Colonic mucosa (tissue), 4 donors: ENCODE measurements at regions of chr16 and their contacts with region 1.

Region 1: DNA sequence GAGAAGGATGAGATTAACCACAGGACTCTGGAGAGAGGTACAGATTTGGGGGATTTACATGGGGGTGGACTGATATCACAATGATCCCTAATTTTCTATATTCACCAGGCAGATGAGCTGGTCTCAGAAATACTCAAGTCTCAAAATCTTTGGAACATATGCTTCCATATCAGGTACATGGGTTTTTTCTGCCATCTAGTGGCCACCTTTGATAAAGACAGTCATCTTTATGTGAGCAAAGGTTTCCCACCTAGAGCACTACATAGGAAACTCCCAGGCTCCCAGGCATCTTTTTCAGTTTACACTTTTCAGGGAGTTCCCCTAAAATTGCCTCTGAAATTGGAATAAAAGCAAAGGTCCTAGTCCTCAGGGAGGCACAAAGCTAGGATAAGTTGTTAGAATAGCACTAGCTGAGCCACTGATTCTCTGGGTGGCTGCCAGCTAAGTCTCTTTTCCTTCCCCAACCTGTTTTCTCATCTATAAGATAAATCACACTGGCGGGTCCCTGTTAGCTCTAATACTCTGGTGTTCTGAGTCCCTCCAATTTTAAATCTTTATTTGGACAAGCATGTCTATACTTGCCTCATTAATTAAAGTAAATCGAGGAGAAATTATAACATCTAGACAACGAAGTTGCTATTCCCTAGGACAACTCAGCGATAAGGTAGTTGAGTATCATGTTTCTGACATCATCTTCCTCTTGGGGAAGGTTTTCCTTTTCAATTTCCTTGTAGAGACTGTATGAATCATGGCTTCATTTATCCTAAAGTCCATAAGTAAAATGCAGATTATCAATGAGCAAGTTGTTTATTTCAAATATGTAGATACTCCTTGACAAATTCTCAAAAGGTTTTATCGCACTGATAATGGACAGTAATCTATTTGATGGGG is 19.0 kb upstream of the MON1B start:
- DNase-seq: peak; percentile 34
- H3K4me3 ChIP-seq: no peak overlapping the region
- H3K27ac ChIP-seq: no peak overlapping the region
- H3K4me1 ChIP-seq: no peaks in the 10 kb centered on the region
- H3K27me3 ChIP-seq: no peaks in the 10 kb centered on the region
- CTCF ChIP-seq: peak; percentile 48

Region 2: GRCh38 chr16:75794426-75794825 is 1377.6 kb before region 1 on chr16:
- intact Hi-C with region 1: loop called (anchors 5 kb)
- DNase-seq: no peak
- H3K4me3 ChIP-seq: no peak overlapping the region
- H3K27ac ChIP-seq: no peak overlapping the region
- H3K4me1 ChIP-seq: no peaks in the 10 kb centered on the region
- H3K27me3 ChIP-seq: no peaks in the 10 kb centered on the region
- CTCF ChIP-seq: no peak

Region 3: GRCh38 chr16:76668207-76668725 is 503.7 kb before region 1 on chr16:
- intact Hi-C with region 1: loop called (anchors 10 kb)
- DNase-seq: no peak
- H3K4me3 ChIP-seq: no peak overlapping the region
- H3K27ac ChIP-seq: no peak overlapping the region
- H3K4me1 ChIP-seq: no peaks in the 10 kb centered on the region
- H3K27me3 ChIP-seq: no peaks in the 10 kb centered on the region
- CTCF ChIP-seq: no peak

Region 4: DNA sequence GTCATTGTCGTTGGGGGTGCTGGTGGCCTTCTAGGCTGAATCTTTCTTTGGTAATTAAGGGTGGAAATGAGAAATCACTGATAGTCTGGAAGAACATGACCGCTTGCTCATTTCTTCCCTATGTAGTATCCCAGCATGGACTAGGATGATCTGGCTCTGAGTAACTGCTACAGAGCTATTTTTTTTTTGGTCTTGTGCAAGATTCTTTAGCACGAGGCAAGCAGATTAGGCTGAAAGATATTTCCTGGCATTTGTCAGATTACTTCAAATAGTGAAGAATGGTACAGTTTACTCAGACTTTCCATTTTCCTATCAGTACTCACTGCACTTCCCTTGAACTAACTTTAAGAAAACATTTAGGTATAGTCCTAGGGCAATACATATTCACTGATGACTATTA is 116.2 kb after region 1 on chr16:
- intact Hi-C with region 1: no loop called
- DNase-seq: no peak
- H3K4me3 ChIP-seq: no peak overlapping the region
- H3K27ac ChIP-seq: no peak overlapping the region
- H3K4me1 ChIP-seq: no peaks in the 10 kb centered on the region
- H3K27me3 ChIP-seq: no peaks in the 10 kb centered on the region
- CTCF ChIP-seq: no peak